Posterior vena cava (tissue), 2 donors: ENCODE measurements at regions of chr7 and their contacts with region 1.

Region 1: GRCh38 chr7:23956772-23957556 is 246.9 kb downstream of the STK31 start:
- DNase-seq: no peak

Region 2: GRCh38 chr7:23918856-23919255 is 38.1 kb before region 1 on chr7:
- intact Hi-C with region 1: loop called in 1 of 2 experiments (anchors 1 kb)
- DNase-seq: no peak